ENCODE measurements at regions of chr7 and their contacts with region 1.

Region 1: DNA sequence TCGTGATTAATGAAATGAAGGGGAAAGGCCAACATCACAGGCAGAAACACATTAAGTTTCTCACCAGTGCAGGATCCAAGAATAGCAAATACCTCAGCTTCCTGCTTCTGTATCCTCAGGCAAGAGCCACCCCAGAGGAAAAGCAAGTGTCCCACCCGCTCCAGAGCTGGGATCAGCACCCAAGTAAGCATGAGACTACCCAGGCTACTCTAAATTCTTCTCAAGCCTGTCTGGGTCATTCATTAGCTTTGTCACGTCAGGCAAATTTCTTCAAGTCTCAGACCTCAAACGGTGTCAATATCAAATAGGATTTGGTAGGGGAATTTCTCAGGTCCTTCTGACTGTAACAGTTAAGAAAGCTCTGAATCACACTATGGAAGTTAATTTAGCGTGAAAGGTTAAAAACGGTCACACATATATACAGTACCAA is 59.0 kb downstream of the GNA12 start:
- DNase-seq: no peak
- H3K4me3 ChIP-seq: no peak overlapping the region
- H3K27ac ChIP-seq: no peak overlapping the region
- H3K4me1 ChIP-seq: no peaks in the 10 kb centered on the region
- H3K27me3 ChIP-seq: no peaks in the 10 kb centered on the region
- CTCF ChIP-seq: no peak

Region 2: DNA sequence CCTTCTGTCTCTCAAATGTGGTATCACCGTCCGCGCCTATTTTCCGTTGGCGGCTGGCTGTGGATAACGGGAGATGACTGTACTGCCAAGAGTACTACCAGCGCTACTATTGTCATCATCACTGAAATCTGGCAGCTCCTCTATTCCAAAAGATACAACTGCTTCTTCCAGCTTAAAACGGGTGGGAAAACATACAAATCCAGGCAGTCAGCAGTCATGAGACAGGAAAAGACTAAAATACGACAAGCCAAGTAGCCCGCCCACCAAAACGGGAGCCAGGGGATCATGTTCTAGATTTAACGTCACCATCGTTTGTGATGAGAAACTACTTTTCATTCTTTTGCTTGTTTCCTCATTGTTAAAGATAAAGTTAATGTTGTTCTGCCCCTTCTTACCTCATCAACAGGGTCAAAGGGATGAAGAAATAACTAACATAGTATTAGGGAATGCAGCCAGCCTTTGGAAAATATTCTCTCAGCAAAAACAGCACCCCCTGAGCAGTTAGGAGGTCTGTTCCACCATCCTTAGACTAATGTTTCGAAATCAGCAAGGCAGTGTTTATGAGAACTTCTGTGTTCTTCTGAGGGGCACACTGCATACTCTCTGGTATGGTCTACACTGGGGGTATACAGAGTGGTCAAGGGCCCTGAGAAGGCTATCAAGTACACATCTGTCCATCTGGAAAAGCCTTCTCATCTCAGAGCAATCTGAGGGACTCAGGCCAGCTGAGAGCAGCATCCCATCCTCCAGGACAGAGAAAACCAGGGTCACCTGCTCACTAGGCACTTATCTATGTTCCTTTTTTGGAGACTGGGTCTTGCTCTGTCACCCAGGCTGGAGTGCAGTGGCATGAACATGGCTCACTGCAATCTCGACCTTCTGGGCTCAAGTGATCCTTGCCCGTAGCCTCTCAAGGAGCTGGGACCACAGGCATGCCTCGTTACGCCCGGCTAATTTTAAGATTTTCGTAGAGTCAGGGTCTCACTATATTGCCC is 11.6 kb after region 1 on chr7:
- CTCF ChIA-PET with region 1: interaction called, 10 read pairs
- POLR2A ChIA-PET with region 1: interaction called, 7 read pairs
- intact Hi-C with region 1: no loop called
- DNase-seq: no peak
- H3K4me3 ChIP-seq: no peak overlapping the region
- H3K27ac ChIP-seq: no peak overlapping the region
- H3K4me1 ChIP-seq: peaks cover 14% of the 10 kb centered on the region
- H3K27me3 ChIP-seq: no peaks in the 10 kb centered on the region
- CTCF ChIP-seq: no peak

Measured in A673 (cell line).